Lower lobe of right lung (tissue), 2 donors: ENCODE measurements at regions of chr12 and their contacts with region 1.

Region 1: DNA sequence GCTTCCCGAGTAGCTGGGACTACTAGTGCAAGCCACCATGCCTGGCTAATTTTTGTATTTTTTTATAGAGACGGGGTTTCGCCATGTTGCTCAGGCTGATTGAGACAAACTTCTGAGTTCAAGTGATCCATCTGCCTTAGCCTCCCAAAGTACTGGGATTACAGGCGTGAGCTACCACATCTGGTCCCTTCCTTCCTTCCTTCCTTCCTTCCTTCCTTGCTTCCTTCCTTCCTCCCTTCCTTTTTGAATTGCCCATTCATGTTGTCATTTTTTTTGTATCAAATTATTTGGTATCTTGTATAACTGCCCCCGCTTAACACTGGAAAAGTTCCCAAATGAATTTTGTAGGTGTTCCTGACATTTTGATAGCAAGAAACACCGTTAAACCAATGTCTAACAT is 11.7 kb downstream of the RAD9B start:
- DNase-seq: no peak
- ATAC-seq: no peak
- H3K4me3 ChIP-seq: no peak overlapping the region
- H3K27ac ChIP-seq: no peak overlapping the region
- H3K4me1 ChIP-seq: no peaks in the 10 kb centered on the region
- H3K27me3 ChIP-seq: no peaks in the 10 kb centered on the region
- CTCF ChIP-seq: no peak

Region 2: DNA sequence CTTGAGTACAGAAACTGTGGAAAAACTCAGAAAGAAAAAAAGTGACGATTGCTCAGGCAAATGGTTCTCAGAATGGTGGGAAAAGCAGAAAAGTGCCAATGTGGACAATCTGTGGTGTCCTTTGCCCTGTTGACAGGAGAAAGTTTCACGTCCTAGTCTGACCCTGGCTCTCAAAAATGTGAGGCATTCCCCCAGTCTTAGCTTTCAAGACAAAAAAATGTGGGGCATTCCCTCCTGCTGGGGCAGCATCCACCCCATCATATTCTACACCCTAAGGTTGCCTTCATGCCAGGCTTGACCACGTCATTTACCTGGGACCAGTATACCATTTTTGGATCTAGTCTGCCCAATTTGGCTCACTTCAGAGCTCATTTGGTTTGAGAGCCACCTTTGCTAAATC is 89.6 kb before region 1 on chr12:
- intact Hi-C with region 1: no loop called
- DNase-seq: no peak
- ATAC-seq: no peak
- H3K4me3 ChIP-seq: no peak overlapping the region
- H3K27ac ChIP-seq: no peak overlapping the region
- H3K4me1 ChIP-seq: no peaks in the 10 kb centered on the region
- H3K27me3 ChIP-seq: no peaks in the 10 kb centered on the region
- CTCF ChIP-seq: no peak

Region 3: DNA sequence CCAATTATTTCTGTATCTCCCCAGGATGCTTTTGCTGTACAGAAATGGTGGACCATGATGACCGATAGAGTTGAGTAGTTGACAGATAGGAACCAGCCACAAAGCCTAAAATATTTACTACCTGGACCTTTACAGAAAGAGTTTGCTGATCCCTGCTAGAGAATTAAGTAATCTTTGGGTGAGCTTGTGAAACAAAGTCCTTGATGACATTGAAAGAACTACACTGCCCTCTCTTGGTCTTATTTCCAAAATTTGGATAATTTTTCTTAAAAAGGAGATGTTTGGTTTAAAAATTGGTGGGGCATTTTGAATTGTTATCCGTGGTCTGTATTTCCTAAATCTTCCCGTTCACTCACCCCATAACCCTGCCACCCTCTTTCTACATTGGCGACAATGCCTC is 86.4 kb after region 1 on chr12:
- intact Hi-C with region 1: loop called (anchors 5 kb)
- DNase-seq: no peak
- ATAC-seq: peak; percentile 65 to 75
- H3K4me3 ChIP-seq: no peak overlapping the region
- H3K27ac ChIP-seq: no peak overlapping the region
- H3K4me1 ChIP-seq: peaks cover 7% of the 10 kb centered on the region
- H3K27me3 ChIP-seq: no peaks in the 10 kb centered on the region
- CTCF ChIP-seq: peak; percentile 43

Region 4: DNA sequence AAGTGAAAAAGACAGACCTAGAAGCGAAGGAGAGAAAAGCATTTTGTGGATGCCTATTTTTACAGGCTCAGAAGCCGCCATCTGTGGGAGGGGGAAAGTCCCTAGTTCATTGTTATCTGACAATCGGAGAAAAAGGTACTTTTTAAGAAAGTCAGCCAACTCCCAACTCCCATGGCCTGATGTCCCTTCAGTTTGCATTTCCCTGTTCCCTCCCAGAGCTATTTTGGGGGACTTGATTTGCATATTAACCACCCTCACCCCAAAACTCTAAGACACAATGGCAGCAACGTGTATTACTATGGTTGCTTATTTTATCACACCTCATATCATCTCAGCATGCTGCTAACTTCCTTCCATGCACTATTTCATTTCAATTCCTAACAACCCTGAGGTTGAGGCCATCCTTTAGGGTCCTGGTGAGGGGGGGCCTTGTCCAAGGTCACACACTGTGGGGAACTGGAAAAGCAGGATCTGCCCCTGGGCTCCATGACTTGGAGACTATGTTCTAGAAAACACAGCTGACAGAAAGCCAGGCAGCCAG is 156.4 kb after region 1 on chr12:
- intact Hi-C with region 1: no loop called
- DNase-seq: no peak
- ATAC-seq: no peak
- H3K4me3 ChIP-seq: no peak overlapping the region
- H3K27ac ChIP-seq: no peak overlapping the region
- H3K4me1 ChIP-seq: no peaks in the 10 kb centered on the region
- H3K27me3 ChIP-seq: no peaks in the 10 kb centered on the region
- CTCF ChIP-seq: no peak